CD4-positive, alpha-beta memory T cell (primary cell): ENCODE measurements at regions of chr22 and their contacts with region 1.

Region 1: DNA sequence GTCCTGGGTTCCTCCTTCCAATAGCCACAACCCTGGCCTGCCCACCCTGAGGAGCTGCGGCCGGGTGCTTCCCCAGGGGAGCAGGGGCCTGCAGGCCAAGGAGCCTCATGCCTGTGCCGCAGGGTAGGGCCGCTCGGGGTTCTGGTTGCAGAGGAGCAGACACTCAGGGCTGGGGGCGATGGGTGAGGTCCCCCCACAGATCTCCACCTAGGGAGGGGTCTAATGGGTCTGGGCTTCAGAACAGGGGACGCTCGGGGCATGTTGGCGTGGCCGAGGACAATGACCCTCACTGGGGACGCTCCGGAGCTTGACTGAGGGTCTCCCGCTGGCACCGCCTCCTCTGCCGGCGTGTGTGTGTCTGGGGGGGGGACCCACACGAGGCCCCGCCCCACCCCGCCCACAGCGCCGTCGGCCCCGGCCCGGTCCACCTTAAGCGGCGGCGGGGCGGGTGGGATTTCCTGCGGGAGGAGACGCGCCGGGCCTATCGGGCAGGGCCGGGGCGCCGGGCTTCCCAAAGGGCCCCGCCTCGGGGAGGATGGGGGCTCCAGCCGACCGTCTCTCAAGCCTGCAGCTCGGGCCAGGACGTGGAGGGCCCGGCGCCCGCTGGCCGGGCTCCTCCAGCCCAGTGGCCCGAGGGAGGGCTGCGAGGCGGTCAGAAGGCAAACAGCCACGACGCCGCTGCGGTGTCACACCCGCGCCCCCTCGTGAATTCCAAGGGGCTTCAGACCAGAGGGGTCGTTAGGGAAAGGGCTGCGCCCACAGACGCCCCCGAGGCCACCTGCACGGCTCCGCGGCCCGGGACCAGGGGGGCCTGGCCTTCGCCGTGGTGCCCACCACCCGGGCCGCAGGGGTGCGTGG is 636 bp upstream of the ZDHHC8 start:
- DNase-seq: peak; percentile 72 to 79 (median 75)
- H3K4me3 ChIP-seq: peak overlapping the region; percentile 21 to 57
- H3K4me3 Mint-ChIP-seq: peak overlapping the region; percentile 41 to 76 (median 53)
- H3K27ac ChIP-seq: peak overlapping the region; percentile 79
- H3K27ac Mint-ChIP-seq: peak overlapping the region; percentile 31 to 88 (median 73)
- H3K4me1 ChIP-seq: peaks cover 48% of the 10 kb centered on the region
- H3K4me1 Mint-ChIP-seq: peaks cover 9 to 48% (median 35%) of the 10 kb centered on the region in 4 donors
- H3K27me3 ChIP-seq: no peaks in the 10 kb centered on the region
- H3K27me3 Mint-ChIP-seq: no peaks in the 10 kb centered on the region

Region 2: GRCh38 chr22:19432133-19432851 is 698.7 kb before region 1 on chr22 and contains the start of gene MRPL40:
- CTCF ChIA-PET with region 1: no interaction called
- POLR2A ChIA-PET with region 1: no interaction called
- intact Hi-C with region 1: loop called (anchors 5 kb)
- DNase-seq: peak; percentile 80 to 88 (median 82)
- H3K4me3 ChIP-seq: peak within 1 kb of the TSS; percentile 88 to 97
- H3K4me3 Mint-ChIP-seq: peak within 1 kb of the TSS; percentile 87 to 97 (median 90)
- H3K27ac ChIP-seq: peak within 1 kb of the TSS; percentile 81
- H3K27ac Mint-ChIP-seq: peak within 1 kb of the TSS; percentile 90 to 96 (median 92)
- H3K4me1 ChIP-seq: peaks cover 43% of the 10 kb centered on the region
- H3K4me1 Mint-ChIP-seq: peaks cover 23 to 48% (median 34%) of the 10 kb centered on the region in 4 donors
- H3K27me3 ChIP-seq: no peaks in the 10 kb centered on the region
- H3K27me3 Mint-ChIP-seq: no peaks in the 10 kb centered on the region
- total RNA-seq, gene MRPL40: 16.2 to 16.8 TPM

Region 3: GRCh38 chr22:19970479-19971275 is 160.3 kb before region 1 on chr22:
- CTCF ChIA-PET with region 1: interaction called, 26 read pairs
- POLR2A ChIA-PET with region 1: interaction called, 13 read pairs
- intact Hi-C with region 1: no loop called
- DNase-seq: peak; percentile 64 to 79 (median 69)
- H3K4me3 ChIP-seq: no peak overlapping the region
- H3K4me3 Mint-ChIP-seq: no peak overlapping the region
- H3K27ac ChIP-seq: no peak overlapping the region
- H3K27ac Mint-ChIP-seq: no peak overlapping the region
- H3K4me1 ChIP-seq: peaks cover 12% of the 10 kb centered on the region
- H3K4me1 Mint-ChIP-seq: peaks cover 0 to 7% (median 5%) of the 10 kb centered on the region in 4 donors
- H3K27me3 ChIP-seq: no peaks in the 10 kb centered on the region
- H3K27me3 Mint-ChIP-seq: no peaks in the 10 kb centered on the region

Region 4: DNA sequence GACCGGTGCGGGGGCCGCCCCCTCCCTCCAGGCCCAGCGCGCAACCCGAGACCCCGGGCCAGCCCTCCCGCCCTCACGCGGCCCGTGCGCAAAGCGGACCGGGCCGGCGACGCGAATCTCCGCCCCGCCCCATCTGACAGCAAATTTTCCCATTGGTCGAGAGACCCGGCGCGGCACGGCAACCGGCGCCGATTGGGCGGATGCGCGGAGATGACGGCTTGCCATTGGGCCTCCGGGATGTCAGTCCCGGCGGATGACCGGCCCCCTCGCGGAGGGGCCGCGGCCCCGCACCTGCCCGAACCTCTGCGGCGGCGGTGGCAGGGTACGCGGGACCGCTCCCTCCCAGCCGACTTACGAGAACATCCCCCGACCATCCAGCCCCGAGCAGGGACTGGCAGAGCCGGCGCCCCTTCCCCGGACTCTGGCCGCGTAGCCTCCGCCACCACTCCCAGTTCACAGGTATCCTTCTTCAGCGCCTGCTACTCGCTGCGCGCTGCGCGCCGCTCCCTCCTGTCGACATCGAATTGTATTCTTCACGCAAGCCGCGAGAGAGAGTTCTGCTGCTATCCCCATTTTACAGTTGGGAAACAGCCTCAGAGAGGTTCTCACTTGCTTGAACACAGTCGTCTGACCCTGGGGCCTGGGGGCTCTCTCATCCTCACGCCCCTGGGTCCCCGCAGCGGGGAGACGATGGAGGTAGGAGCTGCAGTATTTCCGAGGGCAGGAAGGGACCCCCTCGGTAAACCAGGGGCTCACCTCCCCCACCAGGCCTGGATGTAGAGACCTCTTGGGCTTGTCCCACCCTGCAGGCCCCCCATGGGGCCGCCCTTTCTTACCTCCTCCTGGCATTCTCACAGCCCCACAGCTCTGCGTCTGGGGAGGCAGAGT is 114.0 kb before region 1 on chr22 and contains the start of gene ARVCF:
- CTCF ChIA-PET with region 1: interaction called, 3 read pairs
- POLR2A ChIA-PET with region 1: interaction called, 7 read pairs
- intact Hi-C with region 1: loop called (anchors 5 kb)
- DNase-seq: peak; percentile 89 to 94 (median 90)
- H3K4me3 ChIP-seq: peak within 1 kb of the TSS; percentile 77 to 83
- H3K4me3 Mint-ChIP-seq: peak within 1 kb of the TSS; percentile 86 to 92 (median 90)
- H3K27ac ChIP-seq: peak within 1 kb of the TSS; percentile 17
- H3K27ac Mint-ChIP-seq: peak within 1 kb of the TSS in 6 of 7 donors; percentile 8 to 67 (median 59)
- H3K4me1 ChIP-seq: peaks cover 35% of the 10 kb centered on the region
- H3K4me1 Mint-ChIP-seq: peaks cover 7 to 36% (median 20%) of the 10 kb centered on the region in 4 donors
- H3K27me3 ChIP-seq: no peaks in the 10 kb centered on the region
- H3K27me3 Mint-ChIP-seq: peaks cover 0 to 2% of the 10 kb centered on the region in 2 donors
- total RNA-seq, gene ARVCF: 3.5 to 4.2 TPM

Region 5: GRCh38 chr22:20037419-20037818 is 93.5 kb before region 1 on chr22:
- CTCF ChIA-PET with region 1: no interaction called
- POLR2A ChIA-PET with region 1: no interaction called
- intact Hi-C with region 1: no loop called
- DNase-seq: no peak
- H3K4me3 ChIP-seq: no peak overlapping the region
- H3K4me3 Mint-ChIP-seq: no peak overlapping the region
- H3K27ac ChIP-seq: no peak overlapping the region
- H3K27ac Mint-ChIP-seq: peak overlapping the region in 2 of 7 donors; percentile 32 to 78
- H3K4me1 ChIP-seq: peaks cover 22% of the 10 kb centered on the region
- H3K4me1 Mint-ChIP-seq: peaks cover 8 to 25% (median 16%) of the 10 kb centered on the region in 4 donors
- H3K27me3 ChIP-seq: no peaks in the 10 kb centered on the region
- H3K27me3 Mint-ChIP-seq: no peaks in the 10 kb centered on the region

Region 6: DNA sequence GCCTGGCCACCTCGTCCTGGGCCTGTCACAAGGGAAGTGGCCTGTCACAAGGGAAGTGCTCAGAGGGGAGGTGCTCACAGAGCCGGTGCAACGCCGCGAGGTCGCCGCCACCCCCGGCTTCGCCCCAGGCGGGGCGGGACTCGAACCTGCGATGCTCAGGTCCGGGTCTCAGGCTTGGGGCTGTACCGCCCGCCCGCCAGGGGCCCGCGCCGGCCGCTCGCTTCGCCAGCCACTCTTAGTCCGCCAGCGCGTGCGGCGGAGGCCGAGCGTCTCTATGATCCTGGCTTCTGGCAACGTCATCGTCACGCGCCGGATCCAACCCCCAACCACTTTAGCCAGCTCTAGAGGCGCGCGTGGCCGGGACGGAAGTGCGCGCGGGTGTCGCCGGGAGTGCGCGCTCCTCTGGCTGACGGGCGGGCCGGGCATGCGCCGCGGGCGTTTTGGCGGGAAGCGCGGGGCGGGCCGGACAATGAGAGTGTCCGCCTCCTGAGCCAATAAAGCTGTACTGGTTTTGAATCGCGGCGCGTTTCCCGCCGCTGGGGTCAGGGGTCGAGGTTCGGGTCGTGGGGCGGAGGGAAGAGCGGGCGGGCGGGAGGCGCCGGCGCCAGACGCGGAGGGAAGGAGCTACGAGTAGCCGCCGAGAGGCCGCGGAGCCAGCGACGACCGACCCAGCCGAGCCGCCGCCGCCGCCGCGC is 13.9 kb before region 1 on chr22 and contains the start of gene TRMT2A:
- CTCF ChIA-PET with region 1: interaction called, 9 read pairs
- POLR2A ChIA-PET with region 1: interaction called, 28 read pairs
- intact Hi-C with region 1: loop called (anchors 1 kb)
- DNase-seq: peak; percentile 96 to 98 (median 97)
- H3K4me3 ChIP-seq: peak within 1 kb of the TSS; percentile 81 to 82
- H3K4me3 Mint-ChIP-seq: peak within 1 kb of the TSS; percentile 85 to 93 (median 92)
- H3K27ac ChIP-seq: peak within 1 kb of the TSS; percentile 85
- H3K27ac Mint-ChIP-seq: peak within 1 kb of the TSS; percentile 93 to 96 (median 95)
- H3K4me1 ChIP-seq: peaks cover 49% of the 10 kb centered on the region
- H3K4me1 Mint-ChIP-seq: peaks cover 14 to 53% (median 31%) of the 10 kb centered on the region in 4 donors
- H3K27me3 ChIP-seq: no peaks in the 10 kb centered on the region
- H3K27me3 Mint-ChIP-seq: no peaks in the 10 kb centered on the region
- total RNA-seq, gene TRMT2A: 110 to 126 TPM

Region 7: GRCh38 chr22:20298803-20299735 is 168.1 kb after region 1 on chr22:
- CTCF ChIA-PET with region 1: no interaction called
- POLR2A ChIA-PET with region 1: interaction called, 3 read pairs
- intact Hi-C with region 1: loop called (anchors 1 kb)
- DNase-seq: peak; percentile 88 to 93 (median 91)
- H3K4me3 ChIP-seq: peak overlapping the region in 1 of 2 donors; percentile 62
- H3K4me3 Mint-ChIP-seq: peak overlapping the region; percentile 81 to 89 (median 84)
- H3K27ac ChIP-seq: peak overlapping the region; percentile 25
- H3K27ac Mint-ChIP-seq: peak overlapping the region in 6 of 7 donors; percentile 65 to 95 (median 82)
- H3K4me1 ChIP-seq: peaks cover 6% of the 10 kb centered on the region
- H3K4me1 Mint-ChIP-seq: peaks cover 2 to 10% (median 8%) of the 10 kb centered on the region in 4 donors
- H3K27me3 ChIP-seq: no peaks in the 10 kb centered on the region
- H3K27me3 Mint-ChIP-seq: peaks cover 0 to 3% of the 10 kb centered on the region in 2 donors

Region 8: DNA sequence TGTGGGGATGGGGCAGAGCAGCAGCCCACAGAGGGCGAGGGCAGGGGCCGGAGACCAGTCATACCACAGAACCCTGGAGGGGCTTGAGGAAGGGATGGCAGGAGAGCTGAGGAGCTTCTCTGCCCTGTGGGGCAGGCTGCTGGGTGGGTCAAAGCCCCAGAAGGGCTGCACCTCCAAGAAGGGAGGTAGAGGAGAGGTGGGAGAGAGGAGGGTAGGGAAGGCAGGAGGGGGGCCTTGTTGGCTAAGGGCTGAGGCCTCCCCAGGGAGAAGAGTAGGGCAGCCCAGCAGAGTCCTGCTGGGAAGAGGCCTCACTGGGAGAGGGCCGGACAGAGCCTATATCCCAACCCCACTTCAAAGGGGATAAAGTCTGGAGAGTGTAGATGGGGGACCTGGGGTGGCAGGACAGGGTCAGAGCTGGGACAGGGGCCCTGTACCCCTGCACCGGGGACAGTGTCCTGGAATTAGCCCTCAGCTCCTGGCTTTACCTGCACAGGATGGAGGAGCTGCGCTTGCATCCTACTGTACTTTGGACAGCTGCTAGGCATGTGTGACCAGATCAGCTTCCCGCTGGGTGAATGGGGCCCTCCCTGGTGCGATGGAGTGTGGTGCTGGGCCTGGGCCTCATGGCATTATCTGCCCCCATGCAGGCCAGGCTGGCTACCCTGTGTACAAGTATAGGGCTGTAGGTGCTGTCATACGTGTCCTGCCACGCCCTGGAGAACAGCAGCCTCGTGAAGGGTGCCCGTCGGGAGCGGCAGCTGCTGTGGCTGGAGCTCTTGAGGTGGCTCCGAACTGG is 181.6 kb after region 1 on chr22:
- CTCF ChIA-PET with region 1: no interaction called
- POLR2A ChIA-PET with region 1: no interaction called
- intact Hi-C with region 1: no loop called
- DNase-seq: no peak
- H3K4me3 ChIP-seq: no peak overlapping the region
- H3K4me3 Mint-ChIP-seq: no peak overlapping the region
- H3K27ac ChIP-seq: no peak overlapping the region
- H3K27ac Mint-ChIP-seq: no peak overlapping the region
- H3K4me1 ChIP-seq: peaks cover 5% of the 10 kb centered on the region
- H3K4me1 Mint-ChIP-seq: peaks cover 6 to 15% (median 7%) of the 10 kb centered on the region in 4 donors
- H3K27me3 ChIP-seq: no peaks in the 10 kb centered on the region
- H3K27me3 Mint-ChIP-seq: no peaks in the 10 kb centered on the region